Mammary epithelial cell (primary cell): ENCODE measurements at regions of chr2 and their contacts with region 1.

Region 1: GRCh38 chr2:65754219-65754618 is 321.8 kb upstream of the SPRED2 start:
- DNase-seq: peak; percentile 18
- H3K4me3 ChIP-seq: no peak overlapping the region
- H3K27ac ChIP-seq: no peak overlapping the region
- H3K4me1 ChIP-seq: no peaks in the 10 kb centered on the region
- H3K27me3 ChIP-seq: no peaks in the 10 kb centered on the region
- CTCF ChIP-seq: no peak

Region 2: DNA sequence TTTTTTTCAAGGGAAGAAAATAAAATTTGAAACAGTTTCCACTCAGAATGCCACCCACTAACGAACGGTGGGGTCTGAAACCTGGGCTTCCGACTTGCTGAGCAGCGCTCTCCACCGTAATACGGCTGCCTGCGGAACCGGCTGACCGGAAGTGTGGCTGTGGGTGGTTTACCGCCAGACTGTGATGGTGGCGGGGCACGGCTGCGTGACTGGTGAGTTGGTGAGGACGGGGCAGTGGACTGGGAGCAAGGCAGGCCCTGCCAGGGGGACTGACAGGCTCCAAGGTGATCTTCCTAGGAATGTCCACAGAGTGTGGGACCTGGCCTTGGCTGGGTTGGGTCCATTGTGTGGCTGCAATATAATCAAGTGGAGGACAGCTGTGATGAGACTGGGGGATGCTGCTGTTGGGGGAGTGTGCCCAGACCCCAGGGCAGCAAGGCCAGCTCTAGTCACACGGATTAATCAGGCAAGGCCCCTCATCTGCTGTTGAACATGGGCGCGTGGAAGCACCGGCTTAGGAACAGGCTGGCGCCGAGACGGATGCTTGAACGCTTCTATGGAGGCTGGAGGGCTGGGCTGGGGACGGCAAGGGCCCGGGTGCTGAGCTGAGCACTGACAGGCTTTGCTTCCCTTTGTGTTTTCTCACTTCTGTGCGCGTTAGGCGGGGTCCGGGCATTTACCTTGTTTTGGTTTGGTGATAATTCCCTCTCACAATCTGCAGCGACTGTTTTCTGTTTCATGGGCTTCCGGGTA is 35.9 kb after region 1 on chr2:
- CTCF ChIA-PET with region 1: no interaction called
- dilution Hi-C with region 1: no loop called
- in situ Hi-C with region 1: no loop called
- intact Hi-C with region 1: loop called (anchors 5 kb)
- DNase-seq: no peak
- H3K4me3 ChIP-seq: no peak overlapping the region
- H3K27ac ChIP-seq: no peak overlapping the region
- H3K4me1 ChIP-seq: no peaks in the 10 kb centered on the region
- H3K27me3 ChIP-seq: no peaks in the 10 kb centered on the region
- CTCF ChIP-seq: no peak

Region 3: GRCh38 chr2:65813631-65814173 is 59.5 kb after region 1 on chr2:
- CTCF ChIA-PET with region 1: no interaction called
- dilution Hi-C with region 1: loop called (anchors 5 kb)
- in situ Hi-C with region 1: no loop called
- intact Hi-C with region 1: no loop called
- DNase-seq: no peak
- H3K4me3 ChIP-seq: no peak overlapping the region
- H3K27ac ChIP-seq: no peak overlapping the region
- H3K4me1 ChIP-seq: no peaks in the 10 kb centered on the region
- H3K27me3 ChIP-seq: no peaks in the 10 kb centered on the region
- CTCF ChIP-seq: no peak